ENCODE measurements at regions of chr7 and their contacts with region 1.

Region 1: GRCh38 chr7:130896898-130897514 is 163.0 kb upstream of the KLF14 start:
- DNase-seq: peak; percentile 80
- H3K4me3 ChIP-seq: no peak overlapping the region
- H3K27ac ChIP-seq: peak overlapping the region; percentile 84 to 94 (median 88)
- H3K4me1 ChIP-seq: peaks cover 41 to 96% (median 83%) of the 10 kb centered on the region in 4 donors
- H3K27me3 ChIP-seq: no peaks in the 10 kb centered on the region
- CTCF ChIP-seq: peak; percentile 80 to 89 (median 84)
- EP300 ChIP-seq: no peak
- POLR2A ChIP-seq: no peak

Region 2: GRCh38 chr7:130515315-130516040 is 381.5 kb before region 1 on chr7:
- in situ Hi-C with region 1: no loop called
- intact Hi-C with region 1: no loop called
- DNase-seq: no peak
- H3K4me3 ChIP-seq: no peak overlapping the region
- H3K27ac ChIP-seq: no peak overlapping the region
- H3K4me1 ChIP-seq: no peaks in the 10 kb centered on the region
- H3K27me3 ChIP-seq: no peaks in the 10 kb centered on the region
- CTCF ChIP-seq: no peak
- EP300 ChIP-seq: no peak
- POLR2A ChIP-seq: no peak

Region 3: GRCh38 chr7:130996841-130997231 is 99.8 kb after region 1 on chr7:
- in situ Hi-C with region 1: loop called in 2 of 4 experiments (anchors 10 kb)
- intact Hi-C with region 1: no loop called
- DNase-seq: peak; percentile 81
- H3K4me3 ChIP-seq: peak overlapping the region in 1 of 4 donors; percentile 7
- H3K27ac ChIP-seq: peak overlapping the region; percentile 79 to 86 (median 81)
- H3K4me1 ChIP-seq: peaks cover 31 to 87% (median 64%) of the 10 kb centered on the region in 4 donors
- H3K27me3 ChIP-seq: no peaks in the 10 kb centered on the region
- CTCF ChIP-seq: no peak
- EP300 ChIP-seq: no peak
- POLR2A ChIP-seq: peak; percentile 40

Region 4: GRCh38 chr7:131007394-131008330 is 110.7 kb after region 1 on chr7:
- in situ Hi-C with region 1: loop called in 1 of 4 experiments (anchors 10 kb)
- intact Hi-C with region 1: loop called (anchors 5 kb)
- DNase-seq: peak; percentile 82
- H3K4me3 ChIP-seq: no peak overlapping the region
- H3K27ac ChIP-seq: peak overlapping the region; percentile 76 to 84 (median 82)
- H3K4me1 ChIP-seq: peaks cover 33 to 83% (median 47%) of the 10 kb centered on the region in 4 donors
- H3K27me3 ChIP-seq: no peaks in the 10 kb centered on the region
- CTCF ChIP-seq: peak; percentile 39 to 82 (median 60)
- EP300 ChIP-seq: no peak
- POLR2A ChIP-seq: peak; percentile 14

Region 5: GRCh38 chr7:131031099-131031868 is 134.3 kb after region 1 on chr7:
- in situ Hi-C with region 1: loop called in 2 of 4 experiments (anchors 10 to 25 kb)
- intact Hi-C with region 1: no loop called
- DNase-seq: no peak
- H3K4me3 ChIP-seq: no peak overlapping the region
- H3K27ac ChIP-seq: no peak overlapping the region
- H3K4me1 ChIP-seq: peaks cover 8 to 58% (median 15%) of the 10 kb centered on the region in 4 donors
- H3K27me3 ChIP-seq: no peaks in the 10 kb centered on the region
- CTCF ChIP-seq: no peak
- EP300 ChIP-seq: no peak
- POLR2A ChIP-seq: no peak

Region 6: GRCh38 chr7:131040467-131040932 is 143.5 kb after region 1 on chr7:
- in situ Hi-C with region 1: loop called in 3 of 4 experiments (anchors 10 to 25 kb)
- intact Hi-C with region 1: no loop called
- DNase-seq: peak; percentile 77
- H3K4me3 ChIP-seq: no peak overlapping the region
- H3K27ac ChIP-seq: peak overlapping the region; percentile 40 to 82 (median 68)
- H3K4me1 ChIP-seq: peaks cover 18 to 43% (median 29%) of the 10 kb centered on the region in 4 donors
- H3K27me3 ChIP-seq: no peaks in the 10 kb centered on the region
- CTCF ChIP-seq: peak; percentile 86 to 96 (median 91)
- EP300 ChIP-seq: no peak
- POLR2A ChIP-seq: no peak

Region 7: DNA sequence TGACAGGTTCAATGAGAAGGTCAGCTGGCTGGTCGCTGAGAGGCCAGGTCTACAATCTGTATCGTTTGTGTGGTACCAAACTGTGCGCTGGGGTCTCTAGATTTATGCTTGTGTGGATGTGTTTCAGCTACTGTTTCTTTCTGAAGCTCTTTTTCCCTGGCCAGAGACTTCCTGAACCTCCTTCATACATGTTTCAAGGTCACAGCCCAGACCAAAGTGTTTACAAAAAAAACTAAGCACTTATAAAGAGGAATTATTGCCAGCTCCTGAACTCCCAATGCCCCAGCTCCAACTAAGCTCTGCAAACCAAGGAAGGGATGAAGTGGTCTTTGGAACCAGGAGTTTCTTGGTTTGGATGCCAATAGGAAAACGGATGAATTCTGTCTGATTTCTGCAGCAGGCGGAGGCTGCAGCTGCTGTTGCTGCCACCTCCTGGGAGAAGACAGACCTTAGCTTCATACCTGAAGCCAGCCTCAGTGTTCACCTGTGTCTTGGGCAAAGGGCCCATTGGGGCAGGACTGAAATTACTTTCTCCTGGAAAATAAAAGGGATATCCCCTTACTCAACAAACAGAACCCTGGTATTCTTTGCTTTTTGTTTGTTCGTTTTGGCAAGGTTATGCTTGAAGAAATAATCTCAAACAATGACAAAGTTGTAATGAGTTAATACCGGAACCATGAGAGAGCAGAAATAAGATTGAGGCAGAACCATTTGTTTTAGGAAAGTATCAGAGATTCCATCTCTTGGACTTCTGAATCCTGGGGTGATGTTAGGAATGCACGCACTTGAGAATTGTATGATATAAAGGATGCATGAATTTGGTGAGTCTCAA is 406.1 kb after region 1 on chr7:
- in situ Hi-C with region 1: loop called in 1 of 4 experiments (anchors 25 kb)
- intact Hi-C with region 1: no loop called
- DNase-seq: peak; percentile 43
- H3K4me3 ChIP-seq: no peak overlapping the region
- H3K27ac ChIP-seq: no peak overlapping the region
- H3K4me1 ChIP-seq: peaks cover 0 to 4% (median 0%) of the 10 kb centered on the region in 4 donors
- H3K27me3 ChIP-seq: no peaks in the 10 kb centered on the region
- CTCF ChIP-seq: peak; percentile 42 to 47 (median 46)
- EP300 ChIP-seq: no peak
- POLR2A ChIP-seq: no peak

Region 8: DNA sequence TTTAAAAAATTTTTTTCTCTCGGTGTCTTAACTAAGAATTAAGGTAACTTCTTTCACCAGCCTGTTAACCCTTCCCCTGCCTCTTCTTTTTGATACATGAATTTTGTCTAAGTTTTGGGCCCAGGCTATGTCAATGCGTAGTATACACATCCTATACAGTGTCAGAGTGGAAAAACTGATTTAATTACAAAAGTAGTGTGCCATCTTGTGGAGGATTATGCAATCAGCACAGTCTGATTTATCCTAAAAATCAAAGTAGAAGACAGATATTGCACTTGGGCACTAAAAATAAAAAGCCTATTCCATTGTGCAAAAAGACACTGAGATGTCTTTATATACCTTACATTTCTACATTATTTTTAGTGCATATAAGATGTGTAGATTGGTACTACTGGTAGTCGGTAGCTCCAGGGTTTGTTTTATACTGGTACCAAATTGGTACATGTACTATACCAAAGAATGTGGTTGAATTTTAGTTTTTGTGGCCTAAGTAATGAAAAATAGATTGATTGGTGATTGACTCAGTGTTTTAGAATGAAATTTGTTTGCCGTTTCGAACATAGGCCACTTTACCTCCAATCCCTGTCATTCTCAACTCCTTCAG is 527.3 kb after region 1 on chr7:
- in situ Hi-C with region 1: loop called in 1 of 4 experiments (anchors 25 kb)
- intact Hi-C with region 1: loop called (anchors 10 kb)
- DNase-seq: no peak
- H3K4me3 ChIP-seq: no peak overlapping the region
- H3K27ac ChIP-seq: no peak overlapping the region
- H3K4me1 ChIP-seq: peaks cover 0 to 23% (median 0%) of the 10 kb centered on the region in 4 donors
- H3K27me3 ChIP-seq: no peaks in the 10 kb centered on the region
- CTCF ChIP-seq: peak; percentile 48 to 63 (median 56)
- EP300 ChIP-seq: no peak
- POLR2A ChIP-seq: no peak